Panc1 (cell line): ENCODE measurements at regions of chr10 and their contacts with region 1.

Region 1: GRCh38 chr10:69092959-69093850 is 5.3 kb downstream of the SRGN start:
- DNase-seq: peak; percentile 82
- ATAC-seq: peak; percentile 93
- H3K4me3 ChIP-seq: peak overlapping the region in 1 of 2 experiments; percentile 28; a peak in 1 of 4 replicates
- H3K27ac ChIP-seq: no peak overlapping the region
- H3K4me1 ChIP-seq: no peaks in the 10 kb centered on the region; the same call in 1 of the 2 replicates
- H3K27me3 ChIP-seq: no peaks in the 10 kb centered on the region
- CTCF ChIP-seq: peak; percentile 87

Region 2: DNA sequence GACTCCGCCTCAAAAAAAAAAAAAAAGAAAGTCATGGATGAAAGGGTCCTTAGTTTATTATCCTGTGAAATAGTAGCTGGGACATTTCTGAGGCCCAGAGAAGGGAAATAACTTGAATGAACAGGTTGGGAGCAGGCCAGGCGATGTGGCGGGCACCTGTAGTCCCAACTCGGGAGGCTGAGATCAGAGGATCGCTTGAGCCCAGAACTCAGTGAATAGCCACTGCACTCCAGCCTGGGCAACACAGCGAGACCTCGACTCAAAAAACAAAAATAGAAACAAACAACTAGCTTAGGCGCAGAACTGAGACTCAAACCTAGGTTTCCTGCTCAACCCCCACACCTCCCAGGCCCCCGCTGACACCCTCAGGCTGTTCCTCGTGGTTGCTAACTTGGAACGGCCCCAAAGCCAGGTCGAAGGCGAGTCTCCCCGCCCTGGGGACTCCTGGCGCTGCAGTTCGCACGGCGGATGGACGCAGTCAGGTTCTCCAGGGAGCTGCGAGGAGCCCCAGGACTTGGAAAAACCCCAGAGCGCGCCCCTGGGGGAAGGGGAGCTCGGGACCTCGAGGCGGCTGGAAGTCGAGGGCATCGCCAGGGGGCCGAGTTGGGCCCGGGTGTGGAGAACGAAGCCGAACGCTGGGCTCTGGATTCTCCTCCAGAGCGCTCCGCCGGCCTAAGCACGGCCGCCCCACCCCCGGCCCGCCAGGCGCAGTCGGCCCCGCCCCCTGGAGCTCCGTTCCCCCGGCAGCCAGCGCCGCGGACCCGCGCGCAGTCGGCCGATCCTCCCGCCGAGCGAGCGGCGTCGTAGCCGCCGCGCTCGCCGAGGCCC is 266.2 kb before region 1 on chr10 and contains the start of gene STOX1:
- CTCF ChIA-PET with region 1: no interaction called
- POLR2A ChIA-PET with region 1: no interaction called
- in situ Hi-C with region 1: no loop called
- intact Hi-C with region 1: no loop called
- DNase-seq: no peak
- ATAC-seq: peak; percentile 94
- H3K4me3 ChIP-seq: peak within 1 kb of the TSS; percentile 62 to 66
- H3K27ac ChIP-seq: peak within 1 kb of the TSS; percentile 88
- H3K4me1 ChIP-seq: peaks cover 7% of the 10 kb centered on the region; the same call in 1 of the 2 replicates
- H3K27me3 ChIP-seq: no peaks in the 10 kb centered on the region
- CTCF ChIP-seq: no peak
- total RNA-seq, gene STOX1: 5.8 TPM

Region 3: DNA sequence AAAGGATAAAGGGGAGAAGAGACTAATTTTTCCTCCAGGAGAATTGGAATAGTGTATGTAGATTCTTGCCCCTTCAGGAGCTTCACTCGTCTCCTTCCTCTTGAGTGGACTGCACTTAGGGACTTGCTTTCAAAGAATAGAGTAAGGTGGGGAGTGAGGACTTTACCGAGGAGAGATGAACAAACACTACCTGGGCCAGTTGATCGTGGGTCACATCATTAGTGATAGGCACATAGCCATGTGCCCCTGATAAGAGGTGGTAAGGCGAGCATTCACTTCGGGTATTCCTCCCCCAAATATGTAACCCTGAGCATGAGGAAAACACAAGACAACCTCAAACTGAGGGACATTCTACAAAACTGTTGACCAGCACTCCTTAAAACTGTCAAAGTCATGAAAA is 119.2 kb before region 1 on chr10:
- CTCF ChIA-PET with region 1: no interaction called
- POLR2A ChIA-PET with region 1: no interaction called
- in situ Hi-C with region 1: no loop called
- intact Hi-C with region 1: no loop called
- DNase-seq: no peak
- ATAC-seq: no peak
- H3K4me3 ChIP-seq: no peak overlapping the region
- H3K27ac ChIP-seq: no peak overlapping the region
- H3K4me1 ChIP-seq: no peaks in the 10 kb centered on the region
- H3K27me3 ChIP-seq: no peaks in the 10 kb centered on the region
- CTCF ChIP-seq: no peak

Region 4: GRCh38 chr10:68987658-68988057 is 105.5 kb before region 1 on chr10:
- CTCF ChIA-PET with region 1: interaction called, 3 read pairs
- POLR2A ChIA-PET with region 1: interaction called, 11 read pairs
- in situ Hi-C with region 1: no loop called
- intact Hi-C with region 1: no loop called
- DNase-seq: no peak
- ATAC-seq: no peak
- H3K4me3 ChIP-seq: no peak overlapping the region
- H3K27ac ChIP-seq: no peak overlapping the region
- H3K4me1 ChIP-seq: peaks cover 9% of the 10 kb centered on the region
- H3K27me3 ChIP-seq: no peaks in the 10 kb centered on the region
- CTCF ChIP-seq: no peak

Region 5: GRCh38 chr10:69004821-69005220 is 88.4 kb before region 1 on chr10:
- CTCF ChIA-PET with region 1: interaction called, 16 read pairs
- POLR2A ChIA-PET with region 1: no interaction called
- in situ Hi-C with region 1: no loop called
- intact Hi-C with region 1: loop called (anchors 2 kb)
- DNase-seq: no peak
- ATAC-seq: no peak
- H3K4me3 ChIP-seq: no peak overlapping the region
- H3K27ac ChIP-seq: no peak overlapping the region
- H3K4me1 ChIP-seq: no peaks in the 10 kb centered on the region
- H3K27me3 ChIP-seq: no peaks in the 10 kb centered on the region
- CTCF ChIP-seq: peak; percentile 24; the same call in 1 of the 2 replicates

Region 6: GRCh38 chr10:70250961-70251680 is 1157.9 kb after region 1 on chr10:
- CTCF ChIA-PET with region 1: no interaction called
- POLR2A ChIA-PET with region 1: interaction called, 10 read pairs
- in situ Hi-C with region 1: no loop called
- intact Hi-C with region 1: no loop called
- DNase-seq: no peak
- ATAC-seq: no peak
- H3K4me3 ChIP-seq: no peak overlapping the region
- H3K27ac ChIP-seq: no peak overlapping the region
- H3K4me1 ChIP-seq: peaks cover 15% of the 10 kb centered on the region
- H3K27me3 ChIP-seq: peaks cover 6% of the 10 kb centered on the region; the same call in 1 of the 2 replicates
- CTCF ChIP-seq: no peak